AG04450 (cell line): ENCODE measurements at regions of chr15 and their contacts with region 1.

Region 1: DNA sequence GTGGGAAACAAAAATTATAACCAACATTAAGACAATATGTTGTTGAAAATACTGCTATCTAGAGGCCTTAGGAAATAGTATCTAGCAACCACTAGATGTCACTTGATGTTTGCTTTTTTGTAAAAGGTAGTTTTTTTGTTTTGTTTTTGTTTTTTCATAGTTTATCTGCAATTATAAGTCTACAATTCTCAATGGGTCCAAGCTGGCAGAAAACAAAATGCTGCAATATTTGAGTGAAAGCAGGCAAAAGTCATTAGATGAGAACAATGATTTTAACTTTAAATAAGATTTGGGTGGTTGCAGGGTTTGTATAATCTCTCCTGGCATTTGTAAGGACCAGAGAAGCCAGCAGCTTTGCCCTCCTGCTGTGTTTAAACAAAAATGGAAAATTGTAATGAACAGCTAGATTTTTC is 27.0 kb downstream of the DUT start:
- DNase-seq: no peak
- H3K4me3 ChIP-seq: no peak overlapping the region
- H3K27ac ChIP-seq: no peak overlapping the region
- H3K27me3 ChIP-seq: no peaks in the 10 kb centered on the region
- CTCF ChIP-seq: peak; percentile 67

Region 2: GRCh38 chr15:48144889-48145288 is 213.3 kb before region 1 on chr15:
- CTCF ChIA-PET with region 1: no interaction called
- POLR2A ChIA-PET with region 1: no interaction called
- DNase-seq: no peak
- H3K4me3 ChIP-seq: no peak overlapping the region
- H3K27ac ChIP-seq: no peak overlapping the region
- H3K27me3 ChIP-seq: no peaks in the 10 kb centered on the region
- CTCF ChIP-seq: no peak

Region 3: GRCh38 chr15:48330105-48330785 is 28.0 kb before region 1 on chr15:
- CTCF ChIA-PET with region 1: no interaction called
- POLR2A ChIA-PET with region 1: no interaction called
- DNase-seq: no peak
- H3K4me3 ChIP-seq: peak overlapping the region; percentile 82
- H3K27ac ChIP-seq: no peak overlapping the region
- H3K27me3 ChIP-seq: no peaks in the 10 kb centered on the region
- CTCF ChIP-seq: no peak

Region 4: DNA sequence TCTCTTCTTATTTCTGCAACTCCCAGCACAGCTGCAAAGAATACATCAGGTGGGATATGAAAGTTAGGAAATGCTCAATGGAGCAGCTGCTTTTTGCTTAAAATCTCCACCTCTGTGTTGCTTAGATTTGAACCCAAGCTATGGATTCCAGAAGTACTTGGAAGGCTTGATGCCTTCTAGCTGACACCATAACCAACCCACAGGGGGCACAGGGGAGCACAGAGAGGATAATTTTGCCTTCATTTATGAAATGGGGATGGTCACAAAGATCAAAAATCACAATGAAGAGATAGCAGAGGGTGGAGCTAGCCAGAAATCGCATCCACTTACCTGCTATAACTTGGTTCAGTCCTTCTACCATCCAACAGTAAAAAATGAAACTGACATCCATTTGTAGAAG is 48.7 kb after region 1 on chr15:
- CTCF ChIA-PET with region 1: interaction called, 12 read pairs
- POLR2A ChIA-PET with region 1: no interaction called
- DNase-seq: no peak
- H3K4me3 ChIP-seq: no peak overlapping the region
- H3K27ac ChIP-seq: no peak overlapping the region
- H3K27me3 ChIP-seq: no peaks in the 10 kb centered on the region
- CTCF ChIP-seq: 0 out of 2 replicates have a peak, but pooled peaks have one; percentile 33

Region 5: GRCh38 chr15:48440084-48440483 is 81.8 kb after region 1 on chr15:
- CTCF ChIA-PET with region 1: interaction called, 24 read pairs
- POLR2A ChIA-PET with region 1: no interaction called
- DNase-seq: peak; percentile 78
- H3K4me3 ChIP-seq: no peak overlapping the region
- H3K27ac ChIP-seq: peak overlapping the region; percentile 84
- H3K27me3 ChIP-seq: no peaks in the 10 kb centered on the region
- CTCF ChIP-seq: no peak

Region 6: DNA sequence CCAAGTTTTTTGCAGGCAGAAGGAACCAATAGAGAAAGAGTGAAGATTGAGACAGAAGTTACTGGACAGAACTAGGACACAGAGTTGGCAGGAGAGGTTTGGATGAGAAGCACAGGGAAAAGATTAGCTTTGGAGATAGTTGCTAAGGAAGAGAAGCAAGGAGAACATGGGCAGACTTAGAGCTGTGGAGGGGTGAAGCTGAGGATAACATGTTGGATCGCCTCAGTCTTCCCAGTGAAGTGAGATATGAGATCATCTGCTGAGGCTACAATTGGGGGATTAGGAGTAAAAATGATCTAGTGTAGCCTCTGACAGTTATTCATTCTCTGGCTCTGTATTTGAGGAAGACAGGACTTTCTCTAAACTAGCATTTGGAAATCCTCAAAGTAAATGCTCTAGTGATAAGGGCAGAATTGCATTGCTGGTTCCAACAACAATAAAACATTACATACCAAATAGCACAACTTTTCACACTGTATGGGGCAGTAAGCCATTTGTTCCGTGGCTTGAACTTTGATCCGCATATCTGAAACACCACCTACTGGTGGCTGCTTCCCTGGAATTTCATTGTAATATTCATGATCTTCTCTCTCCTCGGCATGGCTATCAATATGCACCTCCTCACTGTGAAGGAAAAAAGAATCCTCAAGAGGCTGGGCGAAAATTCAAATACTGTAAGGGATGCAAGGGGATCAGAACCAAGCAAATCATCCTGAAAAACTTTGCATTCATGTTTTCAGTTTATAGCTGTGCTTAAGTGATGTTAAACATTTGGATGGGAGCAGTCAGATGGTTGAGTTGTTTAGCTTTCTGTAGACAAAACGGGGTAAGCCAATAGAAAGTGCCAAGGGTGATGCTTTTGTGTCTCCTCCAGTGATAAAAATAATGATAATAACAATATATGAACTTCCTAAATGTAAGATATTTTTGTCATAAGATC is 497.5 kb after region 1 on chr15:
- CTCF ChIA-PET with region 1: interaction called, 13 read pairs
- POLR2A ChIA-PET with region 1: no interaction called
- DNase-seq: no peak
- H3K4me3 ChIP-seq: no peak overlapping the region
- H3K27ac ChIP-seq: no peak overlapping the region
- H3K27me3 ChIP-seq: no peaks in the 10 kb centered on the region
- CTCF ChIP-seq: peak; percentile 64